ENCODE measurements at regions of chr2 and their contacts with region 1.

Region 1: DNA sequence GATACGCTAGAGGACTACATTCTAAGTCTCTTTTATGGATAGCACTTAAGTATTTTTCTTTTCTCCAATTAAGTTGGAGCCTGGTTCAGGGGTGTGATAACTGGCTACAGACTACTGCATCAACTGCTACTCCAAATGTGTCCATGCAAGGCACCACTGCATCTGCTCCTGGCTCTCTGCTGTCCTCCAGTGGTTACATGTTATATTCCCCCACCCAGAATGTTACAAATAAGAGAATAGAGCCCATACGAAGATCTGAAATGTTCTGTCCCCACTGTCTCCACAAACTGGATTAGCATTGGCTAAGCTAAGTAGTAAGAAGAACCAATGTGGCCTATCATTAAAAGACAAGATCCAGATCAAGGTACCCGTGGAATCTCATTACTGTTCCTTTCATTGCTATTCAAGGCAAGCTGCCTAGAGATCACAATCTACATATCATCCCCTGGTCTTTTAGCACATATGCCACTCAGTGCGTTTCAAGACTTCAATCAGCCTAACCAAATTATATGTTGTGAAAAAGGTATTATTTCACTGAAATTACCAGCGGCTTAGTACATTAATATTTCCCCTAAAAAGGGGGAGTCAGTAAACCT is 308.3 kb upstream of the SLC8A1 start:
- DNase-seq: peak; percentile 79
- H3K4me3 ChIP-seq: no peak overlapping the region
- H3K27ac ChIP-seq: no peak overlapping the region
- H3K4me1 ChIP-seq: peaks cover 16% of the 10 kb centered on the region
- H3K27me3 ChIP-seq: no peaks in the 10 kb centered on the region

Region 2: GRCh38 chr2:39902103-39902502 is 858.1 kb before region 1 on chr2:
- in situ Hi-C with region 1: loop called (anchors 10 kb)
- DNase-seq: peak; percentile 87
- H3K4me3 ChIP-seq: no peak overlapping the region
- H3K27ac ChIP-seq: no peak overlapping the region
- H3K4me1 ChIP-seq: peaks cover 5% of the 10 kb centered on the region; the same call in 1 of the 2 replicates
- H3K27me3 ChIP-seq: no peaks in the 10 kb centered on the region

Region 3: DNA sequence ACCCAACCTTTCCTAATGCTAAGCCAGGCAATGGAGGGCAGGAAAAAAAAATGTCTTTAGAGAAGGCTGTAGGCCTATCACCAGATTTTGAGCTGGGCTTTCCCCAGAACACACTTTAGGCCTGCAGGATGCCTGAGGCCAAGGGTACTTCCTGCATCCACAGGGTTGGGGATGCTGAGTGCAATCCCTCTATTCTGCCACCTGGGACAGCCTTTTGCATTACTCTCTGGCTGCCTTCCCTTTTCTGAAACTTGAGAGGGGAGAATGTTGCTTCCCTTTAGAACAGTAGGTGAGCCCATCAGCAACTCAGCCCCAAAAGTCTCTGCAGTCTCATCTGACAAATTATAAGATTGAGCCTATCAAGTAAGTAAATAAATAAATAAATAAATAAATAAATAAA is 503.5 kb before region 1 on chr2:
- in situ Hi-C with region 1: loop called (anchors 25 kb)
- DNase-seq: peak; percentile 36
- H3K4me3 ChIP-seq: no peak overlapping the region
- H3K27ac ChIP-seq: no peak overlapping the region
- H3K4me1 ChIP-seq: peaks cover 7% of the 10 kb centered on the region
- H3K27me3 ChIP-seq: no peaks in the 10 kb centered on the region

Region 4: GRCh38 chr2:40488101-40488601 is 272.0 kb before region 1 on chr2:
- in situ Hi-C with region 1: loop called (anchors 25 kb)
- DNase-seq: peak; percentile 73
- H3K4me3 ChIP-seq: no peak overlapping the region
- H3K27ac ChIP-seq: no peak overlapping the region
- H3K4me1 ChIP-seq: peaks cover 11% of the 10 kb centered on the region; the same call in 1 of the 2 replicates
- H3K27me3 ChIP-seq: no peaks in the 10 kb centered on the region